WTC11 (cell line): ENCODE measurements at regions of chr2 and their contacts with region 1.

Region 1: DNA sequence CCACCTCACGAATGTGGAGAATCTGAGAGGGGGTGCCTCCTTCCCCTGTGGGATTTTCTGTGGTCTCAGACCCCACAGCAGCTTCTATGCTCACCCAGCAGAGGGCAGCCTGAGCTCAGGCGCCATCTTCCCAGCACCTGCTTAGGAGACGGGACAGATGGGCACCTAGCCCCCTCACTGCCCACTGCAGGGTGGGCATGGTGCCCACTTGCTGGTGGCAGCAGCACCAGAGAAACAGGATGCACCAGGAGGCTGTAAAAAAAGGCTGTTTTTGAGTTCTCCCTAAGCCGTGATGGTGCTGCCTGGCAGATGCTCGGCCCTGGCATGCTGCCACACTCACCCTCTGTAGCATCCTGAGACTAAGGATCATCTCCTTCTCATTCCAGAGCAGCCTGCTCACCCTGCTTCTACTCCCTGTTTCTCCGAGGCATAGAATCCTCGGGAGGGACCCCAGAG is 19.1 kb upstream of the SLC20A1 start:
- DNase-seq: peak; percentile 55
- ATAC-seq: peak; percentile 81
- H3K4me3 Mint-ChIP-seq: no peak overlapping the region
- H3K27ac Mint-ChIP-seq: no peak overlapping the region
- H3K4me1 Mint-ChIP-seq: peaks cover 31% of the 10 kb centered on the region
- H3K27me3 Mint-ChIP-seq: no peaks in the 10 kb centered on the region; the same call in 1 of the 2 replicates
- CTCF ChIP-seq: peak; percentile 45; the same call in 1 of the 2 replicates

Region 2: GRCh38 chr2:112519506-112519905 is 107.1 kb before region 1 on chr2:
- CTCF ChIA-PET with region 1: no interaction called
- POLR2A ChIA-PET with region 1: no interaction called
- DNase-seq: no peak
- ATAC-seq: no peak
- H3K4me3 Mint-ChIP-seq: no peak overlapping the region
- H3K27ac Mint-ChIP-seq: no peak overlapping the region
- H3K4me1 Mint-ChIP-seq: no peaks in the 10 kb centered on the region
- H3K27me3 Mint-ChIP-seq: no peaks in the 10 kb centered on the region
- CTCF ChIP-seq: no peak

Region 3: DNA sequence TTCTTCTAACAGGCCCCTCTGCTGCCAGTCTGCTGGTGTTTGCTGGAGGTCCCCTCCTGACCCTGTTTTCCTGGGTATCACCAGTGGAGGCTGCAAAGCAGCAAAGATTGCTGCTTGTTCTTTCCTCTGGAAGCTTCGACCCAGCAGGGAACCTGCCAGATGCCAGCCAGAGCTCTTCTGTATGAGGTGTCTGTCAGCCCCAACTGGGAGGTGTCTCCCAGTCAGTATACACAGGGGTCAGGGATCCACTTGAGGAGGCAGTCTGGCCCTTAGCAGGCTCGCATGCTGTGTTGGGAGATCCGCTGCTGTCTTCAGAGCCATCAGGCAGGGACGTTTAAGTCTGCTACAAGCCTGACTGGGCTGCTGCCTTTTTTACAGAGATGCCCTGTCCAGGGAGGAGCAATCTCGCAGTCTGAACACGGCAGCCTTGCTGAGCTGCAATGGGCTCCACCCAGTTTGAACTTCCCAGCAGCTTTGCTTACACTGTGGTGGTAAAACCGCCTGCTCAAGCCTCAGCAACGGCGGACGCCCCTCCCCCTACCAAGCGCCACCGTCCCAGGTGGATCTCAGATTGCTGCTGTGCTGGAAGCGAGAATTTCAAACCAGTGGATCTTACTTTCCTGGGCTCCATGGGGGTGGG is 12.3 kb before region 1 on chr2:
- CTCF ChIA-PET with region 1: interaction called, 10 read pairs
- POLR2A ChIA-PET with region 1: no interaction called
- DNase-seq: peak; percentile 63
- ATAC-seq: peak; percentile 98
- H3K4me3 Mint-ChIP-seq: peak overlapping the region; percentile 33; the same call in 1 of the 2 replicates
- H3K27ac Mint-ChIP-seq: no peak overlapping the region
- H3K4me1 Mint-ChIP-seq: peaks cover 22% of the 10 kb centered on the region
- H3K27me3 Mint-ChIP-seq: peaks cover 19% of the 10 kb centered on the region
- CTCF ChIP-seq: no peak